ENCODE measurements at regions of chr9 and their contacts with region 1.

Region 1: GRCh38 chr9:113401027-113401792 is at the start of gene ALAD:
- DNase-seq: peak; percentile 95 to 100
- H3K4me3 ChIP-seq: peak within 1 kb of the TSS; percentile 55 to 94
- H3K27ac ChIP-seq: peak within 1 kb of the TSS; percentile 45 to 46
- H3K4me1 ChIP-seq: peaks cover 0 to 10% of the 10 kb centered on the region in 2 donors
- H3K27me3 ChIP-seq: no peaks in the 10 kb centered on the region
- CTCF ChIP-seq: peak; percentile 96
- total RNA-seq, gene ALAD: 71.4 TPM

Region 2: GRCh38 chr9:113178087-113178486 is 223.1 kb before region 1 on chr9:
- intact Hi-C with region 1: no loop called
- DNase-seq: no peak
- H3K4me3 ChIP-seq: no peak overlapping the region
- H3K27ac ChIP-seq: no peak overlapping the region
- H3K4me1 ChIP-seq: no peaks in the 10 kb centered on the region
- H3K27me3 ChIP-seq: no peaks in the 10 kb centered on the region
- CTCF ChIP-seq: no peak

Region 3: DNA sequence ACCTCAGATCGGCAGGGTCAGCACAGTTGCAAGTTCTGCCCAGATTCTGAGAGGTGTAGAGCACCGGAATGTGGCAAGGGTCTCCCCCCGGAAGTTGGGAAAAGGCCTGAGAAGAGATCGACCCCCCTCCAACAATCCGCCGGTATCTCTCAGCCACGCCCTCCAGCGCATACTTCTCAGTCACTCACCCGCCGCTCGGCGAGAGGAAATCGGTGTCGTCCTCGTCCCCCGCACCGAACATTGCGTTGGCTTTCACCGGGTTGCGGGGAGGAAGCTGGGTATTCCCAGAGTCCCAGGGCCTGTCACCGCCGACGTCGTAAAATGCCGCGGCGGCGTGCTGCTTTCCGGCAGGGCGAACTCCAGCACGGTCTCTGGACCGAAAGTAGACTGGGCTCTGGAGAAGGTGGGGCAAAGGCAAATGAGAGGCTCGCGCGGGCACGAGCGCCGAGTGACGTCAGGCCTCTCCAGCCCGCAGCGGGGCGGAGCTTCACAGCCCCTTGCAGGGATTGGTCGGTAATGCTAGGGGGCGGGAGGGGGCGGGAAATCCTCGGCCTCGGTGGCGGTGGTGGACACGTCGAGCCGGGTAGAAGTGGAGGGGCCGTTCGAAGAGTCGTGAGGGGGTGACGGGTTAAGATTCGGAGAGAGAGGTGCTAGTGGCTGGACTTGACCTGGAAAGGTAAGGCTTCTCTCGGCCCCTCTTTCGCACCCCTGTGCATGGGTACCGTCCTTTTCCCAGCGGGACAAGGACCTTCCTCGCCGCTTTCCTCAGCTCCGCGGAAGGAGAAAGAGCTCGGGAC is 180.0 kb before region 1 on chr9 and contains the starts of genes FKBP15 and SLC31A1:
- intact Hi-C with region 1: loop called (anchors 5 kb)
- DNase-seq: peak; percentile 95 to 99
- H3K4me3 ChIP-seq: peak within 1 kb of the TSS; percentile 92 to 99
- H3K27ac ChIP-seq: peak within 1 kb of the TSS; percentile 79 to 85
- H3K4me1 ChIP-seq: peaks cover 10 to 19% of the 10 kb centered on the region in 2 donors
- H3K27me3 ChIP-seq: no peaks in the 10 kb centered on the region
- CTCF ChIP-seq: no peak
- total RNA-seq, gene FKBP15: 24.4 TPM
- total RNA-seq, gene SLC31A1: 3.7 TPM

Region 4: DNA sequence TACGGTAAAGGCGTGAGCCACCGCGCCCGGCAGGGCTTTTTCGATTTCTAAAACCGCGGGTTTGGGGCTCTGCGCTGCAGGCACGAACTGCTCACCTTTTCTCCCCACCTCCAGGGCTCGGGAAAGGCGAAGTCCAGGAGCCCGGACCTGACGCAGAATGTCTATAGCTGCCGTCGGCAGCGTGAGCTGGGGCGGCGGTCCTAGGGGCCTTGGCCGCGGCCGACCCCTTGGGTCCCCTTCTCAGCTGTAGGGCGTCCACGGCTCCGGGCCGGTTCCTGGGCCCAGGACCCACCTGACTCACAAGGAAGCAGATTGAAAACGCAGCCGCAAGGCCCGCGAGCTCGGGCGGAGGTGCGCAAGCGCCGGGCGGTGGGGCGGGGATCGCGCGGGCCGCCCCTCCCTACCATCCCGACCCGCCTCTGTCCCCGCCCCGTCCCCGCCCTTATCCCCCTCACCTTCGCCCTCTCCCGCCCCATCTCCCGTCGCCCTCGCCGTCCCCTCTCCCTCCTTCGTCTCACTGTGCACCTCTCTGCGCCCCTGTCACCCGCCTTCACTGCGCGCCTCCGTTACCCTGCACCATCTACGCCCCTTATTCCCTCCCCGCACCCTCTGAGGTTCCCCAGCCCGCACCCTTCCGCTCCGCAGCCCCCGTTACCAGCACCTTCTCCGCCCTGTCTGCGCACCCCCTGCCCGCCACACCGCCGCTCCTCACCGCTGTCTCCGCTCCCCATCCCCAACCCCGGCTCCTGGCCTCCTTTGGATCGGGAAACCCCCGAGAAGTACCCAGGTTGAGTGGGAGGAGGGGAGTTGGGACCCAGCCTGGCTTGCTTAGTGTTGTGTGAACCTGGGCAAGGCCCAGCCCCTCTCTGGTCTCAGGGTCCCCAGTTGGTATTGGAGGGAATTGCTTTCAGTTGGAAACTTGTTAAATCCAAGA is 24.3 kb before region 1 on chr9 and contains the start of gene HDHD3:
- intact Hi-C with region 1: loop called (anchors 2 kb)
- DNase-seq: peak; percentile 24 to 91
- H3K4me3 ChIP-seq: peak within 1 kb of the TSS; percentile 70 to 88
- H3K27ac ChIP-seq: peak within 1 kb of the TSS; percentile 68 to 75
- H3K4me1 ChIP-seq: peaks cover 6 to 8% of the 10 kb centered on the region in 2 donors
- H3K27me3 ChIP-seq: no peaks in the 10 kb centered on the region
- CTCF ChIP-seq: no peak
- total RNA-seq, gene HDHD3: 16.5 TPM

Region 5: DNA sequence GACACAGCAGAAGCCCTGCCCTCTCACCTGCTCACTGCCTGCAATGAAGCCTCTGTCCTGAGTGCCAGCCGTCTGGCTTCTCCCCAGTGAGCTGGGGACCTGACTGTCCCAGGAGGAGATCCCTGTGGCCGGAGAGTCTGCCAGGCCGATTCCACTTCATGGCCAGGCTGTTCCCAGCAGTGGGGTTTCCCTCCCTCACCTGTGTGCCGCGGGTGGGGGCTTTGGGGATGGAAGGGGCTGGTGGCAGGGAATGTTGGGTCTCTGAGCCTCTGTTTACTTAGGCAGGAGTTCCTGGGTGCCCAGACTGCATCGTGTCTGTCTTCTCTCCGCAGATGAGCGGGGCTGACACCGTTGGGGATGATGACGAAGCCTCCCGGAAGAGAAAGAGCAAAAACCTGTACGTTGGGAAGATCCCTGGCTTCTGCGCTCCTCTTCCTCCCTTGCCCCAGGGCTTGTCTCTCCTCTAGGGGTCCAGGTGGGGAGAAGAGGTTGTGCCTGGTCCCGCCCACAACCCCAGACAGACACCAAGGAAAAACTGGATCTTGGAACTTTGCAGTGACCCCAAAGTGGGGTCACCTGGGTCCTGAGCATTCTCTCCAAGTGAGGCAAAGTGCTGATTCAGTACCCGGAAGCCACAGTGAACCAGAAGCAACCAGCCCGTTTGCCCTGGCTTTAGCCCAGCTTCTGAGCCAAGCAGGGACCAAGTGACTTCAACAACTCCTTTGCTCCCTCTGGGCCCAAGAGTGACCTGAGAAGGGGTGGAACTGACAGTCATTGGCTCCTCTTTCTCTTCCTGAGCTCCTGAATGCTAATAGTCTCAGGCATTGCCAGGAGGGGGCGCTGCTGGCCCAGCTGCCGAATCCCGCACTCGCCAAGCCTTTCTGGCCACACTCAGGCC is 190.0 kb after region 1 on chr9:
- intact Hi-C with region 1: loop called (anchors 2 kb)
- DNase-seq: peak in 1 of 2 donors; percentile 91
- H3K4me3 ChIP-seq: no peak overlapping the region
- H3K27ac ChIP-seq: peak overlapping the region; percentile 69 to 80
- H3K4me1 ChIP-seq: peaks cover 10 to 44% of the 10 kb centered on the region in 2 donors
- H3K27me3 ChIP-seq: no peaks in the 10 kb centered on the region
- CTCF ChIP-seq: peak; percentile 84 to 94 (median 92)

Region 6: GRCh38 chr9:113657703-113658544 is 256.7 kb after region 1 on chr9:
- intact Hi-C with region 1: loop called (anchors 1 kb)
- DNase-seq: peak; percentile 24 to 91
- H3K4me3 ChIP-seq: no peak overlapping the region
- H3K27ac ChIP-seq: no peak overlapping the region
- H3K4me1 ChIP-seq: peaks cover 5 to 13% of the 10 kb centered on the region in 2 donors
- H3K27me3 ChIP-seq: no peaks in the 10 kb centered on the region
- CTCF ChIP-seq: peak; percentile 94 to 97 (median 95)

Measured in ascending aorta (tissue), 2 donors.